Right ventricle myocardium inferior (tissue), 1 donor: ENCODE measurements at regions of chr10 and their contacts with region 1.

Region 1: GRCh38 chr10:63644418-63645142 is 123.4 kb downstream of the REEP3 start:
- DNase-seq: no peak
- ATAC-seq: no peak

Region 2: GRCh38 chr10:63670291-63670898 is 25.8 kb after region 1 on chr10:
- intact Hi-C with region 1: loop called (anchors 1 kb)
- DNase-seq: no peak
- ATAC-seq: peak; percentile 65

Region 3: DNA sequence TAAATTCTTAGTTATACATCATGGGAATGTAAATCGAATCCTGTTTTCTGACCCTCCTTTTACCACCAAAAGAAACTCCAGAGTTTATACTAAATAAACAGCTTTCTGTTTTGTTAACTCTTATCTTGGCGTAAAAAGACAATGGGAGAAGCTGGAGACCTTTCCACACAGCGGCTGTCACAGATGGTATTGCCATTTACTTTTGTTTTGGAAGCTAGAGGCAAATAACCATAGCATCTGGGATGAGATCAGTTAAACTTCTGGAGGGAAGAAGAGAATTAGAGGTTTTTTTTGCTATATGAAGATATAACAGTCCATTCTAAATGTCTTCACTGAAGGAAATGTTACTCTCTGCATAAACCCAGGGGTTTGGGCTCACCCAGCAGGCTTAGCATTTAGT is 135.5 kb after region 1 on chr10:
- intact Hi-C with region 1: no loop called
- DNase-seq: no peak
- ATAC-seq: no peak